Vagina (tissue), 2 donors: ENCODE measurements at regions of chr16 and their contacts with region 1.

Region 1: GRCh38 chr16:13229039-13229438 is 327.6 kb downstream of the SHISA9 start:
- DNase-seq: no peak
- H3K4me3 ChIP-seq: no peak overlapping the region
- H3K27ac ChIP-seq: no peak overlapping the region
- H3K4me1 ChIP-seq: no peaks in the 10 kb centered on the region
- H3K27me3 ChIP-seq: no peaks in the 10 kb centered on the region
- CTCF ChIP-seq: no peak
- POLR2A ChIP-seq: no peak

Region 2: DNA sequence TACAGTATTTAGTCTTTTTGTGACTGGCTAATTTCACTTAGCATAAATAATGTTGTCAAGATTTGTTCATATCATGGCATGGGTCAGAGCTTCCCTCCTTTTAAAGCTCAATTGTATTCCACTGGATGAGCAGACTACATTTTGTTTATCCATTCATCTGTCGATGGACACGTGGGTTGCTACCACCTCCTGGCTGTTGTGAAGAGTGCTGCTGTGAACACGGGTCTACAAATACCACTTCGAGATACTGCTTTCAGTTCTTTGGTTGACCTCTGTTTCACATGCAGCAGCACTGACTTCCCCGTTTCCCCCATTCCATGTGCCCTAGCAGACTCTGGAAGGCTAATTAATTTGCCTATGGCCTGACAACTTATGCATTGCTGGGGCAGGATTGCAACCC is 42.2 kb before region 1 on chr16:
- intact Hi-C with region 1: no loop called
- DNase-seq: no peak
- H3K4me3 ChIP-seq: no peak overlapping the region
- H3K27ac ChIP-seq: no peak overlapping the region
- H3K4me1 ChIP-seq: no peaks in the 10 kb centered on the region
- H3K27me3 ChIP-seq: no peaks in the 10 kb centered on the region
- CTCF ChIP-seq: no peak
- POLR2A ChIP-seq: no peak

Region 3: GRCh38 chr16:13307255-13307654 is 78.2 kb after region 1 on chr16:
- intact Hi-C with region 1: loop called (anchors 10 kb)
- DNase-seq: no peak
- H3K4me3 ChIP-seq: no peak overlapping the region
- H3K27ac ChIP-seq: no peak overlapping the region
- H3K4me1 ChIP-seq: no peaks in the 10 kb centered on the region
- H3K27me3 ChIP-seq: no peaks in the 10 kb centered on the region
- CTCF ChIP-seq: no peak
- POLR2A ChIP-seq: no peak

Region 4: DNA sequence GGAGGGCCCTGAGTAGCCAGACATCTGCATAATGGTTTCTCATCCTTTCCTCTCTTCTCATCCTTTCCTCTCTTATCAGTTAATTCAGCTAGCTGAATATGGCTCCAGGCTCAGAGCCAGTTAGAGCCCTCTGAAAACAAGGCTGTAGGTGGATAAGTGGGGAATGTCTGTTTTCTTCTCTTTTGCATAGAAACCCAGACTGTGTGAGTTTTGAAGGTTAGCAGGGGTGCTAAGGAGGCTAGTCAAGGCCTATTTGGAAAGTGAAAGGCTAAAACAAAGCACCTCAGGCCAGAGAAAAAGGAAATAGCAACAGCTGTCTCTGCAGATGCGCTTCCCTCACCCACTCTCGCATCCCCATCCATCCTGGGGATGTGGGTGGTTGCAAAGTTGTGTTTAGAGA is 93.3 kb after region 1 on chr16:
- intact Hi-C with region 1: no loop called
- DNase-seq: no peak
- H3K4me3 ChIP-seq: no peak overlapping the region
- H3K27ac ChIP-seq: no peak overlapping the region
- H3K4me1 ChIP-seq: no peaks in the 10 kb centered on the region
- H3K27me3 ChIP-seq: no peaks in the 10 kb centered on the region
- CTCF ChIP-seq: no peak
- POLR2A ChIP-seq: no peak